ENCODE measurements at regions of chr9 and their contacts with region 1.

Region 1: GRCh38 chr9:4630836-4631235 is 31.3 kb upstream of the PLPP6 start:
- DNase-seq: no peak
- H3K4me3 ChIP-seq: no peak overlapping the region
- H3K27ac ChIP-seq: no peak overlapping the region
- H3K27me3 ChIP-seq: no peaks in the 10 kb centered on the region
- CTCF ChIP-seq: no peak

Region 2: DNA sequence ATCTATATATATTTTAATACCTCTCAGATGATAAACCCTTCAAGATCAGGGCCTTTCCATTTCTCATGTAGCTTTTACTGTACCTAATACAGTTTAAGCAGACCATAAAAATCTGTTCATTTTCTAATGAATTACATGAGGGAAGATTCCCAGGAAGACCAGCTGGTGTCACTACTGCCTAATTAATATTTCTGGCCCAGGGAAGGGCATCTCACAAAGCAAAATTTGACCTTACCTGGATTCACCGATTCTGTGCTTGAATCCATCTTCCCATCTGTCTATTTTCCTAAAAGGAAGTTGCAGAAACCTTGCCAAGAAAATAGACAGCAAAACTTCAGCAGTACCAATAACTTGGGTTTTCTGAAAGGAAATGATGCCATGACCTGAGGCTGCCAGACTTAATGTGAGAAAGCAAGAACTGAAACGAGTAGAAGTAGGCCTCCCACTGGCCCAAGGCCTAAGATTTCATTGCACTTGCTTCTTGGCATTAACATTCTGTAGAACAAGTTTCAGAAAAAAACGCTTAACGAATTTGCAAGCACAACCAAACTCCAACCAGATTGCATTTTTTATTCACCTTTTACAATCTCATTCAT is 248.0 kb before region 1 on chr9:
- intact Hi-C with region 1: loop called in 1 of 2 experiments (anchors 10 kb)
- DNase-seq: peak in 1 of 10 donors; percentile 18
- H3K4me3 ChIP-seq: no peak overlapping the region
- H3K27ac ChIP-seq: no peak overlapping the region
- H3K27me3 ChIP-seq: no peaks in the 10 kb centered on the region
- CTCF ChIP-seq: peak; percentile 34 to 77 (median 55)

Region 3: DNA sequence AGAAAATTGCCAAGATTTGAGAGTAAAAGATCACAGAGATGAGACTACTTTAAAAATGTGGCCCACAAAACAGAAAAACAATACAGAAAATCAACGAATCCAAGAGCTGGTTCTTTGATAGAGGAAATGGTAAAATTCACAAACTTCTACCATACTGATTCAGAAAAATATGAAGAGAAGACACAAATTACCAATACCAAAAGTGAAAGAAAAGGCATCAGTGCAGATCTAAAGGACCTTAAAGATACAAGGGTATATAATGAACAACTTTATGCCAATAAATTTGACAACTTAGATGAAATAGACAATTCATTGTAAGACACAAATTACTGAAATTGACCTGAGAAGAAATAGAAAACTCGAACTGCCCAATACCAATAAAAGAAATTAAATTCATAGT is 164.9 kb before region 1 on chr9:
- intact Hi-C with region 1: no loop called
- DNase-seq: no peak
- H3K4me3 ChIP-seq: no peak overlapping the region
- H3K27ac ChIP-seq: no peak overlapping the region
- H3K27me3 ChIP-seq: no peaks in the 10 kb centered on the region
- CTCF ChIP-seq: no peak

Measured in dorsolateral prefrontal cortex (tissue), 120 donors.